ENCODE measurements at regions of chr3 and their contacts with region 1.

Region 1: DNA sequence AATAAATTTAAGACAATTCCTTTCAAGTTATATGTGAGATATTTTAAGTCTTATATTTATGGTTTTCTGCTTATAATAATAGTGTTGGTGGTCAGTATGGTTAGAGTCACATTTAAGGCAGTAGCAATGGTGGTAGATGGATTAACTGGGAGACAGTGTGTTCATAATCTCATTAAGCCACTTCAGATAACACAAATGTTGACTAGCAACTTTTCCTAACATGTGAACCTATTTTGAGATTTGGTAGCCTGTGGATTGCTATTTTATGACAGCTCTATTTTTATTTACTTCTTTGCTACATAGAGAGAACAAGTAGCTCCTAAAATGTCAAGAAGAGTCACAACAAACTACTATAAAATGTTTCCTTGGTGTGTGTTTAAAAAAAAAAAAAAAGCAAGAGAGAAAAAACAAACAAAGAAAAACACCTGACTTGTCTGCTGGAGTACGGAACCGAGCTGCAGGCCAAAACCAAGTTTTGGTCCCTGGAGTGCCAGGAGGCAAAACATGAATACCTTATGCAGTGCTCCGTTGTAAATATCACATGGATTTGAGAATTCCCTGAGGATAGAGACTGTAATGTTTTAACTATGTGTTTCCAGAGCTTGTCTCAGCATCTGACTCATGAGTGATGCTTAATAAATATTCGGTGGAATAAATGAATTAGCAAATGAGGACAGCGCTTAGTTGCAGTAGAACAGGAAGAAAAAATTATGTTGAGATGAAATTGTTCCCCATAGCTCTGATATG is 457.1 kb upstream of the ROBO2 start:
- DNase-seq: no peak
- H3K4me3 ChIP-seq: no peak overlapping the region
- H3K27ac ChIP-seq: no peak overlapping the region
- H3K4me1 ChIP-seq: no peaks in the 10 kb centered on the region
- H3K27me3 ChIP-seq: no peaks in the 10 kb centered on the region
- CTCF ChIP-seq: no peak
- POLR2A ChIP-seq: no peak

Region 2: GRCh38 chr3:75967071-75967470 is 615.7 kb before region 1 on chr3:
- intact Hi-C with region 1: no loop called
- DNase-seq: no peak
- H3K4me3 ChIP-seq: no peak overlapping the region
- H3K27ac ChIP-seq: no peak overlapping the region
- H3K4me1 ChIP-seq: no peaks in the 10 kb centered on the region
- H3K27me3 ChIP-seq: no peaks in the 10 kb centered on the region
- CTCF ChIP-seq: no peak
- POLR2A ChIP-seq: no peak

Region 3: GRCh38 chr3:76456322-76456721 is 126.5 kb before region 1 on chr3:
- intact Hi-C with region 1: no loop called
- DNase-seq: no peak
- H3K4me3 ChIP-seq: no peak overlapping the region
- H3K27ac ChIP-seq: no peak overlapping the region
- H3K4me1 ChIP-seq: no peaks in the 10 kb centered on the region
- H3K27me3 ChIP-seq: no peaks in the 10 kb centered on the region
- CTCF ChIP-seq: no peak
- POLR2A ChIP-seq: no peak

Region 4: GRCh38 chr3:78506581-78507195 is 1923.9 kb after region 1 on chr3:
- intact Hi-C with region 1: loop called (anchors 5 kb)
- DNase-seq: no peak
- H3K4me3 ChIP-seq: no peak overlapping the region
- H3K27ac ChIP-seq: no peak overlapping the region
- H3K4me1 ChIP-seq: no peaks in the 10 kb centered on the region
- H3K27me3 ChIP-seq: no peaks in the 10 kb centered on the region
- CTCF ChIP-seq: no peak
- POLR2A ChIP-seq: no peak

Measured in breast epithelium (tissue), 4 donors.